ENCODE measurements at regions of chr11 and their contacts with region 1.

Region 1: GRCh38 chr11:86592659-86593451 is 79.6 kb downstream of the ME3 start:
- DNase-seq: peak; percentile 96
- ATAC-seq: peak; percentile 96
- H3K4me3 Mint-ChIP-seq: no peak overlapping the region
- H3K27ac Mint-ChIP-seq: peak overlapping the region; percentile 87
- H3K4me1 Mint-ChIP-seq: peaks cover 70% of the 10 kb centered on the region
- H3K27me3 Mint-ChIP-seq: no peaks in the 10 kb centered on the region

Region 2: GRCh38 chr11:85947431-85948272 is 645.2 kb before region 1 on chr11:
- CTCF ChIA-PET with region 1: no interaction called
- POLR2A ChIA-PET with region 1: no interaction called
- intact Hi-C with region 1: loop called (anchors 1 to 2 kb)
- DNase-seq: peak; percentile 62
- ATAC-seq: peak; percentile 80
- H3K4me3 Mint-ChIP-seq: peak overlapping the region; percentile 46
- H3K27ac Mint-ChIP-seq: peak overlapping the region; percentile 97
- H3K4me1 Mint-ChIP-seq: peaks cover 48% of the 10 kb centered on the region
- H3K27me3 Mint-ChIP-seq: no peaks in the 10 kb centered on the region

Region 3: DNA sequence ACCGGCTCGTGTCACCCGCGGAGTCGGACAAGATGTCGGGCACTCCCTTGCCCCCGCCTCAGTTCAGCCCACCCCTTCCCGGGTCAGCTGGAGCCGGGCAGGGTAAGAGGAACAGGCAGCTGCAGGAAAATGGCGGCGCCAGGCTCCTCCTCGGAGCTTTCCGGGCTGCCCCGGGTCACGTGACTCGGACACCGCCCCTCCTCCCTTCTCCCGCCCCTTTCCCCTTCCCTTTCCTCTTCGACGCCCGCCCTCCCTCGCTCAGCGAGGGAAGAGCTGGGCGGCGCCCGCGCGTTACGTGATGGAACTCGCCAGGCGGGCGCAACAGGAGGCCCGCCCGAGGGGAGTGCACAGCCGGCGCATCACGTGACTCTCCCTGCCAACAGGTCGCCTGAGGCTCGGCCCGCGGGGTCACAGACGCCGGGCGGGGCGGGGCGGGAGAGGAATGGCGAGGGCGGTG is 523.9 kb before region 1 on chr11 and contains the start of gene PICALM:
- CTCF ChIA-PET with region 1: no interaction called
- POLR2A ChIA-PET with region 1: no interaction called
- intact Hi-C with region 1: loop called (anchors 1 to 5 kb)
- DNase-seq: peak; percentile 99
- ATAC-seq: peak; percentile 87
- H3K4me3 Mint-ChIP-seq: peak within 1 kb of the TSS; percentile 89
- H3K27ac Mint-ChIP-seq: peak within 1 kb of the TSS; percentile 91
- H3K4me1 Mint-ChIP-seq: peaks cover 27% of the 10 kb centered on the region
- H3K27me3 Mint-ChIP-seq: no peaks in the 10 kb centered on the region
- total RNA-seq, gene PICALM: 63.8 to 88.3 TPM

Region 4: DNA sequence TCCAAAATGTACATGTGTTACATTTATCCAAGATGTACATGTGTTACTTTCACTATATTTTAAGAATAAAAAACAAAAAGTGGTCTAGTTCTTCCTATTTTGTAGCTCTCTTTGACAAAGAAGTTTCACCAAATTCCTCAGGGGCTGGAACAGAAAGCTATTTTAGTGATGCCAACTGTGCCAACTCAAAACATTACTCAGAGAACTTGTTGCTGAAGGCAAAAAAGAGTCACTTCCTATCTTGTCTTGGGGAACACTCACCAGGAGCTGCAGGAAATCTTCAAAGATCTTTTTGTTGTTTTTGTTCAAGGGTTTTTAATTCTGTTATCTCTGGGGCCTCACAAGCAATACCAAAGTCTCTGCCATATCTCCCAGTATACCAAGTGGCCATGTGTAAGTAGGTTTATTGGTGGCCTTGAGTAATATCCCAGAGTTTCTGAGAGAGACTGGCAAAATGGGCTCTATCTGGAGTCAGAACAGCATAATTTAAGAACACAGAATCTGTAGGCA is 361.9 kb before region 1 on chr11:
- CTCF ChIA-PET with region 1: no interaction called
- POLR2A ChIA-PET with region 1: no interaction called
- intact Hi-C with region 1: loop called (anchors 2 kb)
- DNase-seq: no peak
- ATAC-seq: peak; percentile 28
- H3K4me3 Mint-ChIP-seq: peak overlapping the region; percentile 20
- H3K27ac Mint-ChIP-seq: peak overlapping the region; percentile 86
- H3K4me1 Mint-ChIP-seq: peaks cover 65% of the 10 kb centered on the region
- H3K27me3 Mint-ChIP-seq: no peaks in the 10 kb centered on the region

Region 5: DNA sequence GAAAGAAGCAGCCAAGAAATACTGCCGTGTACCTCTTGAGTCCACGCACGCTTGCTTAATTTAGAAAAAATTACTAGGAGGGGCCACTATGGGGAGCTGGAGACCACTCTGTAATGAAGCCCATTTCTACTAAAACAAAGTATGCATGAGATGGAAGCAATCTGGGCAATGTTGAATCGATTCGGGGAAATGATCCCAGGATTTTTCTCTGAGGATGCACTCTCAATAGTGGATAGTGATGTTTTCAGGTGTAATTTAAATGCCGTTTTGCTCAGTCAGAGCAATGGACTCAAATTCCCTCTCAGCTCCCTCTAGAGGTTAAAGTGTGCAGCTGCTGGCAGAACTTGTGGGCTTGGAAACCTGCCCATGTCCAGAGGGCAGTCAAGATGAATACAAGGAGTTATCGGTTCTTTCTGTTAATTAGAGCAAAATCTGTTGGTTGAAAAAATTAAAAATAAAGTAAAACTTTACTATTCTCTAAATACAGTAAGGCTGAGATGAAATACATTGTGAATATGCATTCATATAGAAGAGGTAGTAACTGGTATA is 15.5 kb after region 1 on chr11:
- CTCF ChIA-PET with region 1: interaction called, 34 read pairs
- POLR2A ChIA-PET with region 1: no interaction called
- intact Hi-C with region 1: no loop called
- DNase-seq: peak; percentile 68
- ATAC-seq: peak; percentile 87
- H3K4me3 Mint-ChIP-seq: no peak overlapping the region
- H3K27ac Mint-ChIP-seq: no peak overlapping the region
- H3K4me1 Mint-ChIP-seq: peaks cover 17% of the 10 kb centered on the region
- H3K27me3 Mint-ChIP-seq: no peaks in the 10 kb centered on the region

Region 6: DNA sequence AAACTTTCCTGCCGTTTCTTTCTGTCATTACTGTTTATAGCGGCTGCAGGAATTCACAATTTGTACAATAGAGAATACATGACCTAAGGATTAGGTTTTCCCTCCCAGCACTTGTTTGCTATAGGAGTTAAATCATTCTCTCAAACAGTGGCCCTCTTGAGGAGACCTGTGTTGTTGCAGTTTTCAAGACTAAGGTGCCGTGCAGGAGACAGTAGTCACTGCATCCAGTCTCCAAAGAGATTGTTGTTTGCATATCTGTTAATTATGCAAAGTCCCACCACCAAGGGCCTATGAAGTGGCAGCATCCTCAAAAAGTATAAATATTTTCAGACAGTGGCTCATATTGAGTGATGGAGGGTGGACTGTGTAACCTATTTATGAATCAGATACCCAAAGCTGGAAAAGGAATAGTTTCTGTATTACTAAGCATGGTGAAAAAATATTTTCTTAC is 209.8 kb after region 1 on chr11:
- CTCF ChIA-PET with region 1: interaction called, 8 read pairs
- POLR2A ChIA-PET with region 1: interaction called, 10 read pairs
- intact Hi-C with region 1: loop called (anchors 1 kb)
- DNase-seq: peak; percentile 39
- ATAC-seq: peak; percentile 34
- H3K4me3 Mint-ChIP-seq: no peak overlapping the region
- H3K27ac Mint-ChIP-seq: no peak overlapping the region
- H3K4me1 Mint-ChIP-seq: peaks cover 62% of the 10 kb centered on the region
- H3K27me3 Mint-ChIP-seq: peaks cover 55% of the 10 kb centered on the region

Region 7: DNA sequence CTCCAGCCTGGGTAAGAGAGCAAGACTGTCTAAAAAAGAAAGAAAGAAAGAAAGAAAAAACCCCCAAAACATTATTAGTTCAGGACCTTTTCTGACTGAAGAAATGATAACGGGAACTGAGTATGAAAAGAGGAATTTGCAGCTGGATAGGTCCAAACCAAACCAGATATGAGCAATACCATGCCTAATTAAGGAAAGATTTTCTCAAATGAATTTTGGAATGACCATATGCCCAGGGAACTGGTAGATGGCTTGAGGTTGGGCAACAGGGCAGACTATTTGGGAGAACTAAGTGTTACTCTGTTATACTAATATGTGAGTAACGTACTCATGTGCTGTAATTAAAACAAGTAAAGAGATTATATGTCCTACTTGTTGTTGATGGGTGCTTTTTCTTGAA is 631.0 kb after region 1 on chr11:
- CTCF ChIA-PET with region 1: no interaction called
- POLR2A ChIA-PET with region 1: no interaction called
- intact Hi-C with region 1: no loop called
- DNase-seq: no peak
- ATAC-seq: no peak
- H3K4me3 Mint-ChIP-seq: no peak overlapping the region
- H3K27ac Mint-ChIP-seq: no peak overlapping the region
- H3K4me1 Mint-ChIP-seq: peaks cover 4% of the 10 kb centered on the region
- H3K27me3 Mint-ChIP-seq: no peaks in the 10 kb centered on the region

Measured in activated CD4-positive, alpha-beta T cell treated with anti-CD3 and anti-CD28 coated beads for 36 hours (primary cell).